ENCODE measurements at regions of chr1 and their contacts with region 1.

Region 1: DNA sequence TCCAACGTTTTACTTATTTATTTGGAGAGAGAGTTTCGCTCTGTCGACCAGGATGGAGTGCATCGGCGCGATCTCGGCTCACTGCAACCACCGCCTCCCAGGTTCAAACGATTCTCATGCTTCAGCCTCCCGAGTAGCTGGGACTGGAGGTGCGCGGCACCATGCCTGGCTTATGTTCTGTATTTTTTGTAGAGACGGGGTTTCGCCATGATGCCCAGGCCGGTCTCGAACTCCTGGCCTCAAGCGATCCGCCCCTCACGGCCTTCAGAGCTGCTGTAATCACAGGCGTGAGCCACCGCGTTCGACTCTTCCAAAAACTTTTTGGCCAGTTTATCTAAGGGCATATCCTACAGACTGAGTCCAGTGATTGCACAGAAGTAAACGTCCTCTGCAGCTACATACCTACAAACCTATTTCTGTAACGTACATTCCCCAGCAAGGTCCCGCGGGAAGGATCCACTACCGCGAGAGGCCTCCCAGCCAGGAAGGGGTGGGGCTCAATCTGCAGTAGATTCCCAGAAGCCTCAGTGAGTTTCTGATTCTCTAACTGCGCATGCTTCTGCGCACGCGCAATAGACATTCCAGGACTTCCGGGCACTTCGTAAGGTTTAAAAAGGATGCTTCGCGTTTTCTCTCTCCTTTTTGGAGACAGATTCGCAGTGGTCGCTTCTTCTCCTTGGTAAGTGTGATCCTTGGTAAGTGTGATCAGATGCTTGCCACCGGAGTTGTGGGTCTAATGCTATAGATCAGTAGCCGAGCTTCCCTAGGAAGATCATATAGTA is at the start of gene RCC1:
- DNase-seq: peak; percentile 97 to 99 (median 98)
- H3K4me3 ChIP-seq: peak within 1 kb of the TSS; percentile 58 to 93 (median 91)
- H3K4me3 Mint-ChIP-seq: peak within 1 kb of the TSS; percentile 94 to 96
- H3K27ac ChIP-seq: peak within 1 kb of the TSS; percentile 73 to 81
- H3K27ac Mint-ChIP-seq: peak within 1 kb of the TSS; percentile 86 to 95 (median 94)
- H3K4me1 ChIP-seq: peaks cover 40 to 44% of the 10 kb centered on the region in 2 donors
- H3K4me1 Mint-ChIP-seq: peaks cover 42% of the 10 kb centered on the region
- H3K27me3 ChIP-seq: no peaks in the 10 kb centered on the region
- H3K27me3 Mint-ChIP-seq: no peaks in the 10 kb centered on the region
- CTCF ChIP-seq: no peak
- polyA plus RNA-seq, gene RCC1: 8.7 to 10.6 (median 10.1) TPM

Region 2: DNA sequence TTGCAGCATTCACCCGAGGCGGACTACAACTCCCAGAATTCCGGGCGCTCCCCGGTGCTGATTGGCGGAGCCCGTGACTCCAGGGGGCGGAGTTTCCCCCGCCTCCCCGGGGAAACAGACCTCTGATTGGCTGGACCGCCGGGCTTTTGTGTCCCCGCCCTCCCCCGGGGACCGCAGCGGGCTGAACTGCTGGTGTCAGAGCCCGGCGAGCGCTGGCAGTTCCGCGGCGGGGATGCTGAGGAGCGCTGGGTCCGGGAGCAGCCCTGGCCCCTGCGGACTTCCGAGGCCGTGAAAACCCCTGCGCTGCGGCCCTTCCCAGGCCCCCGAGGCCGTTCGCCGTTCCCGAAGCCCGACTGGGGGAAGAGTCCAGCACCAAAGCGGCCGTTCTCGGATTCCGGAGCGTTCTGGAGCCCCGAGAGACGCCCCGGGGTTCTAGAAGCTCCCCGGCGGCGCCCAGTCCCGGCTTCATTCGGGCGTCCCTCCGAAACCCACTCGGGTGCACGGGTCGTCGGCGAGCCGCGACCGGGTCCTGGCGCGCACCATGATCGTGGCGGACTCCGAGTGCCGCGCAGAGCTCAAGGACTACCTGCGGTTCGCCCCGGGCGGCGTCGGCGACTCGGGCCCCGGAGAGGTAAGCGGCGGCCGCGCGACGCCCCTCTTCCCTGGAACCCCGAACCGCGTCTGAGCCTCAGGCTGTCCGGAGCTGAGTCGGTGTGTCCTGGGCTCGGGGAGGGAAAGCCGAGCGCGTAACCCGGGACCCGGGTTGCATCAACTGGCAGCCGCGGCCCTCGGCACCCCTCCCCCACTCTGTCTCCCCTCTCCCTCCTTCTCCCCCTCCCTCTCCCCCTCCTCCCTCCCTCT is 246.1 kb before region 1 on chr1 and contains the start of gene SESN2:
- intact Hi-C with region 1: loop called in 1 of 2 experiments (anchors 5 kb)
- DNase-seq: peak; percentile 99 to 100 (median 100)
- H3K4me3 ChIP-seq: peak within 1 kb of the TSS; percentile 84 to 96 (median 96)
- H3K4me3 Mint-ChIP-seq: peak within 1 kb of the TSS; percentile 80 to 81
- H3K27ac ChIP-seq: peak within 1 kb of the TSS; percentile 88 to 92
- H3K27ac Mint-ChIP-seq: peak within 1 kb of the TSS; percentile 95 to 99 (median 96)
- H3K4me1 ChIP-seq: peaks cover 23 to 24% of the 10 kb centered on the region in 2 donors
- H3K4me1 Mint-ChIP-seq: peaks cover 26% of the 10 kb centered on the region
- H3K27me3 ChIP-seq: peaks cover 2 to 14% of the 10 kb centered on the region in 2 donors
- H3K27me3 Mint-ChIP-seq: peaks cover 15 to 22% (median 16%) of the 10 kb centered on the region in 3 donors
- CTCF ChIP-seq: no peak
- polyA plus RNA-seq, gene SESN2: 5.0 to 15.7 (median 5.1) TPM

Region 3: DNA sequence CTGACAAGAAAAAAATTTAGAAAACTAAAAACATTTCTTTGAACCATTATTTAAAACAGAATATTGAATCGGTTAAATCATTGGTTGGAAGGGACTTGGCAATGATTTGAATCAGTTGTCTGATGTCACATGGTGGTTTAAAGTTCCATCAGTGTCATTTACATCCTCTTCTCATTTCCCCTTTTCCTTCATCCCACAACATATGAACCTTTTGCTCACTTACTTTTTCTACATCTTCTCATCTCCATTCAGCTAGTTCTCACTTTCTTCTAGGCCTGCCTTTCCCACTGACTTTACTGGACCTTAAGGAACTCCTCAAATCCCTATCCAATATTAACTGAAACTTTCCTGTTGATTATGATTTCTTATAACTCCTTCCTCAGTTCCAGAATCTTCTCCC is 77.6 kb before region 1 on chr1:
- intact Hi-C with region 1: loop called in 1 of 2 experiments (anchors 10 kb)
- DNase-seq: peak; percentile 14 to 52 (median 18)
- H3K4me3 ChIP-seq: no peak overlapping the region
- H3K4me3 Mint-ChIP-seq: no peak overlapping the region
- H3K27ac ChIP-seq: peak overlapping the region in 1 of 2 donors; percentile 26
- H3K27ac Mint-ChIP-seq: peak overlapping the region in 5 of 7 donors; percentile 1 to 63 (median 39)
- H3K4me1 ChIP-seq: peaks cover 9 to 18% of the 10 kb centered on the region in 2 donors
- H3K4me1 Mint-ChIP-seq: peaks cover 16% of the 10 kb centered on the region
- H3K27me3 ChIP-seq: no peaks in the 10 kb centered on the region
- H3K27me3 Mint-ChIP-seq: peaks cover 0 to 2% (median 0%) of the 10 kb centered on the region in 3 donors
- CTCF ChIP-seq: no peak

Region 4: GRCh38 chr1:28437934-28438699 is 67.5 kb before region 1 on chr1:
- intact Hi-C with region 1: no loop called
- DNase-seq: peak; percentile 34 to 70 (median 39)
- H3K4me3 ChIP-seq: peak overlapping the region in 1 of 3 experiments; percentile 23
- H3K4me3 Mint-ChIP-seq: peak overlapping the region; percentile 0 to 39
- H3K27ac ChIP-seq: peak overlapping the region in 1 of 2 donors; percentile 58
- H3K27ac Mint-ChIP-seq: peak overlapping the region; percentile 28 to 84 (median 75)
- H3K4me1 ChIP-seq: peaks cover 8 to 12% of the 10 kb centered on the region in 2 donors
- H3K4me1 Mint-ChIP-seq: peaks cover 13% of the 10 kb centered on the region
- H3K27me3 ChIP-seq: no peaks in the 10 kb centered on the region
- H3K27me3 Mint-ChIP-seq: no peaks in the 10 kb centered on the region
- CTCF ChIP-seq: no peak

Region 5: GRCh38 chr1:28581536-28582247 is 76.1 kb after region 1 on chr1:
- intact Hi-C with region 1: loop called in 1 of 2 experiments (anchors 5 kb)
- DNase-seq: peak; percentile 93 to 96 (median 95)
- H3K4me3 ChIP-seq: peak overlapping the region; percentile 65 to 88 (median 82)
- H3K4me3 Mint-ChIP-seq: peak overlapping the region; percentile 93 to 94
- H3K27ac ChIP-seq: peak overlapping the region; percentile 76 to 78
- H3K27ac Mint-ChIP-seq: peak overlapping the region; percentile 85 to 95 (median 93)
- H3K4me1 ChIP-seq: peaks cover 25 to 34% of the 10 kb centered on the region in 2 donors
- H3K4me1 Mint-ChIP-seq: peaks cover 48% of the 10 kb centered on the region
- H3K27me3 ChIP-seq: no peaks in the 10 kb centered on the region
- H3K27me3 Mint-ChIP-seq: peaks cover 0 to 3% (median 0%) of the 10 kb centered on the region in 3 donors
- CTCF ChIP-seq: no peak

Region 6: DNA sequence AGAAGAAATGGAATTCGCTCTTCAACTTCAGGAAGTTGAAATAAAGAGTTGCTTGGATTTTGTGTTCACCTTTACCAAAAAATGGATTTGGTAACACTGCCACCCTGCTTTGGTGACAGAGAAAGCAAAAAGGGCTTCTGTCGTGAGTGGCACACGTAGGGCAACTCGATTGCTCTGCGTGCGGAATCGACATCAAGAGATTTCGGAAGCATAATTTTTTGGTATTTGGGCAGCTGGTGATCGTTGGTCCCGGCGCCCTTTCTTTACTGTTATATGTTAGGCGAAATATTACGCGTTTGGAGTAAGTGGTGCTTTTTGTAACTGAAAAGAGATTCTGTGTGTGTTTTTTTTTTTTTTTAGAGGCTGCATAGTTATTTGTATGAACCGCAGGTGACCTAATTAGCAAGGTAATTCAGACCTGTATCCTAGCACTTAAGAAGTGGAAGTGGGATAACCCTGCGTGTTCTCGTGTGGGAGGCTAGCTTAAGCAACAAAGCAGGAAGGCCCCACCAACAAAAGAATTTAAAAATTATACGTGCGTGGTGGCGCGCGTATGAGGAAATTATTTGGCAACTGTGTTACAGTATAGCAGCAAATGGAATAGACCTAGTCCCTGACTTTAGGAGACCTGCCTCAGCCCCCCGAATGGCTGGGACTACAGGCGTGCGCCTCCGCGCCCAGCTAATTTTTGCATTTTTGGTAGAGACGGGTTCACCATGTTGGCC is 143.0 kb after region 1 on chr1 and contains the start of gene RNU11:
- intact Hi-C with region 1: loop called in 1 of 2 experiments (anchors 5 kb)
- DNase-seq: peak; percentile 96 to 98 (median 96)
- H3K4me3 ChIP-seq: peak within 1 kb of the TSS; percentile 17 to 65 (median 33)
- H3K4me3 Mint-ChIP-seq: peak within 1 kb of the TSS; percentile 75 to 93
- H3K27ac ChIP-seq: peak within 1 kb of the TSS; percentile 80 to 97
- H3K27ac Mint-ChIP-seq: peak within 1 kb of the TSS; percentile 94 to 100 (median 99)
- H3K4me1 ChIP-seq: peaks cover 36 to 48% of the 10 kb centered on the region in 2 donors
- H3K4me1 Mint-ChIP-seq: peaks cover 43% of the 10 kb centered on the region
- H3K27me3 ChIP-seq: no peaks in the 10 kb centered on the region
- H3K27me3 Mint-ChIP-seq: peaks cover 0 to 2% (median 0%) of the 10 kb centered on the region in 3 donors
- CTCF ChIP-seq: no peak
- polyA plus RNA-seq, gene RNU11: not detected

Region 7: DNA sequence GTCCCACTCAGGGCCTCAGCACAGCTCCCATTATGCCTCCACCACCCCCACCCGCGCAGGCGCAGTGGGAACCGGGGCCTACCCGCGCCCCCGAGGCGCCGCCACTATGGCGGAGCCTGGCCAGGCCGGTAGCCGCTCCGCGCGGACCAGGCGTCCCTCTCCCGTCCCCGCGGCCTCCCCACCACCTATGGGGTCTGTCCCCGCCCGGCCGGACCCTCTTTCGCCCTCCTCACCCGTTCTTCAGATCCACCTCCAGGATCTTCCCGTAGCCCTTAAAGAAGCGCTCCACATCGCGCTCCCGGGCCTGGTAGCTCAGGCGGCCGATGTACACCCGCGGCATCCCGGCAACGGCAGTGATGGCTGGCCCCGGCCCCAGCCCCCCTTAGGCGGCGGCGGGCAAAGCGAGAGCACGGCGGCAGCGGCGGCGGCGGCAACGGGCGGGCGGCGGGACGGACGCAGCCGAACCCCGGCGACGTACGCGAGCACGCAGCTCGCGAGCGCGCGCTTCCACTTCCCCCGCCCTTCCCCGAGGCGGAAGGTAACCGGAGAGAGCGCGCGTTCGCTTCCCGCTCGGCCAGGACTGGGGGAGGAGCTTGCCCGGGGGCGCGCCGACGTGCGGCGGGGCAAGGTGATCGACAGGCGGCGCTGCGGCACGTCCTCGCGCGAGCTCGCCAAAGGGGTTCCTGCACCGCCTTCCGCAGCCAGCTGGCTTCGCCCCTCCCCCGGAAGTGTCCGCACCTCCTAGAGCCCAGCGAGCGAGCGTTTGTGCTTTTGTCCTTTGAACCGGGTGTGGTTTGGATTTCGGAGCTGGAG is 676.0 kb after region 1 on chr1 and contains the start of gene SRSF4:
- intact Hi-C with region 1: loop called in 1 of 2 experiments (anchors 5 kb)
- DNase-seq: peak; percentile 98 to 99 (median 98)
- H3K4me3 ChIP-seq: peak within 1 kb of the TSS; percentile 80 to 91 (median 87)
- H3K4me3 Mint-ChIP-seq: peak within 1 kb of the TSS; percentile 93 to 95
- H3K27ac ChIP-seq: peak within 1 kb of the TSS; percentile 91 to 96
- H3K27ac Mint-ChIP-seq: peak within 1 kb of the TSS; percentile 91 to 97 (median 95)
- H3K4me1 ChIP-seq: peaks cover 35 to 52% of the 10 kb centered on the region in 2 donors
- H3K4me1 Mint-ChIP-seq: peaks cover 51% of the 10 kb centered on the region
- H3K27me3 ChIP-seq: no peaks in the 10 kb centered on the region
- H3K27me3 Mint-ChIP-seq: peaks cover 0 to 2% (median 0%) of the 10 kb centered on the region in 3 donors
- CTCF ChIP-seq: peak; percentile 76
- polyA plus RNA-seq, gene SRSF4: 38.4 to 66.8 (median 55.5) TPM

Measured in CD14-positive monocyte (primary cell).